ENCODE measurements at regions of chr17 and their contacts with region 1.

Region 1: DNA sequence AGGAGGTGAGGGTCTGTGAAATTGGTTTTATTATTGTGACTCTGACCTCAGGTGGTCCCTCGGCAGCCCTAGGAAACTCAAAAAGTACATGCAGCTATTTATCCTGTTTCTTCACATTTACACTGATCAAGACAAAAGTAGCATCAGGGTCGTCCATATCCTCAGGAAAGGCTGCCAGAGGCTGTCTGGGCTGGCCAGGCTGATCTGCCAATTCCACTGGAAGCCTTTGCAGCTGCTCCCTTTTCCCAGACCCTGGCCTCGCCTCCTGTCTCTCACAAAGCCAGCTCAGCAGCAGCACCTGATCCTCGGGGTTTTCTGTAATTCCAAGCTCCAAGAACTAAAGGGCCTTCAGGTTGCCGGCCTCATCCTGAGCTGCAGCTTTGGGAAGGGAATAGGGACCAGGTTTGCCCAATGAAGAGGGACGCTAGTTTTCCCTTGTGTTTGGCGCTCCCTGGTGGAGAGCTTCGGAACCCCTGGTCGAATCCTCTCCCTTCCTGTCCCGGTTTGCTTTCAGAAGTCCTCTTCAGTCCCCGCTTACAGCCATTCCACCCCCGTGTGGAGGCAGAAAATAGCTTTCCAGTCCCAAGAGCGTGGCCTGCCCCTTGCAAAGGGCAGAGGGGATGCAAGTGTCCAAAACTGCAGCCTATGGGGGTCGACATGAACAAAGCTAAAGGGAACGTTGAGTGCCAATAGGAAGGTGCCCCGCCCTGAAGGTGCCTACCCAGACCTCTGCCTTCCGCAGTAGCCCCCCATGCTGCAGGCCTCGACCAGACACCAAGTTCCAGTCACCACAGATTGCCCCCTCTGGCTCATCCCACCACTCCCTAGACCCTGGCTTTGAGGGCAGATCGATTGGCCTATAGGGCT is 13.4 kb downstream of the MFSD6L start:
- DNase-seq: peak; percentile 68
- ATAC-seq: no peak
- H3K4me3 ChIP-seq: no peak overlapping the region
- H3K4me3 Mint-ChIP-seq: no peak overlapping the region
- H3K27ac ChIP-seq: no peak overlapping the region
- H3K27ac Mint-ChIP-seq: no peak overlapping the region
- H3K4me1 ChIP-seq: peaks cover 3 to 6% of the 10 kb centered on the region in 2 donors
- H3K4me1 Mint-ChIP-seq: peaks cover 2% of the 10 kb centered on the region
- H3K27me3 ChIP-seq: peaks cover 0 to 6% (median 0%) of the 10 kb centered on the region in 4 experiments
- H3K27me3 Mint-ChIP-seq: peaks cover 6% of the 10 kb centered on the region
- CTCF ChIP-seq: peak; percentile 94

Region 2: DNA sequence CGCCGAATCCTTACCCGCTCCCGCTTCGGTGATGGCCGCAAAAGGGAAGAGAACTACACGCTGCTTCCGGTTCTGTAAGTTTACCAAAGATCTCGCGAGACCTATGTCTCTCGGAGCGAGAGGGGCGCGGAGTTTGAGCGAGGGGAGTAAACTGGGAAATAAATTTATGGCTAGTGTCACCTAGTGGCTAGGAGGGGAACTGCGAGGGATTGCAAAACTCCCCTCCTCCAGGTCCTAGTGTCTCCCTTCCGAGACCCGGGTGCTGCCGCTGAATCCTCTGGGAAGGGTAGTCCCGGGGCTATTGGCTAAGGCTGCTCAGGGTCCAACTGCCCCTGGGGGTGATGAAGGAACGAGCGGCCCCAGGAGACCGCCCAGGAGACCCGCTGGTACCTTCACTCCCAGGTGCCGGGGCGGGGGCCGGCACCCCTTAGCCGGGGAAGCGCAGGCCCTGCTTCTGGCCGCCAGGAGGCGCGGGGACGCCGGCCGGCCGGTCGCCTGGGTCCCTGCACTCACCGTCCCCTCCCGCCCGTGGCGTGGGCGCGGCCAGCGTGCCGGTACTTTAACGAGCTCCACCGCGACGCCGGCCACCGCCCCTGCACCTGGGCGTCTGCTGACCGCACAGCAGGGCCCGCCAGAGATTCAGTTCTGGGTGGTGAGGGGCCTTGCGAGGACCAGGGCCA is 402.5 kb before region 1 on chr17 and contains the start of gene RPL26:
- CTCF ChIA-PET with region 1: interaction called, 16 read pairs
- POLR2A ChIA-PET with region 1: no interaction called
- intact Hi-C with region 1: loop called (anchors 1 kb)
- DNase-seq: peak; percentile 98
- ATAC-seq: peak; percentile 89
- H3K4me3 ChIP-seq: peak within 1 kb of the TSS; percentile 73 to 95 (median 84)
- H3K4me3 Mint-ChIP-seq: peak within 1 kb of the TSS; percentile 89
- H3K27ac ChIP-seq: peak within 1 kb of the TSS; percentile 72 to 82
- H3K27ac Mint-ChIP-seq: peak within 1 kb of the TSS; percentile 87
- H3K4me1 ChIP-seq: peaks cover 25 to 36% of the 10 kb centered on the region in 2 donors
- H3K4me1 Mint-ChIP-seq: peaks cover 50% of the 10 kb centered on the region
- H3K27me3 ChIP-seq: no peaks in the 10 kb centered on the region
- H3K27me3 Mint-ChIP-seq: no peaks in the 10 kb centered on the region
- CTCF ChIP-seq: peak; percentile 100
- total RNA-seq, gene RPL26: 2,601 and 2,684 TPM in 2 replicates

Region 3: GRCh38 chr17:8409966-8410864 is 375.6 kb before region 1 on chr17:
- CTCF ChIA-PET with region 1: interaction called, 13 read pairs
- POLR2A ChIA-PET with region 1: no interaction called
- intact Hi-C with region 1: no loop called
- DNase-seq: peak; percentile 85
- ATAC-seq: peak; percentile 76
- H3K4me3 ChIP-seq: no peak overlapping the region
- H3K4me3 Mint-ChIP-seq: no peak overlapping the region
- H3K27ac ChIP-seq: no peak overlapping the region
- H3K27ac Mint-ChIP-seq: peak overlapping the region; percentile 50
- H3K4me1 ChIP-seq: peaks cover 0 to 5% of the 10 kb centered on the region in 2 donors
- H3K4me1 Mint-ChIP-seq: peaks cover 4% of the 10 kb centered on the region
- H3K27me3 ChIP-seq: peaks cover 0 to 19% (median 4%) of the 10 kb centered on the region in 4 experiments
- H3K27me3 Mint-ChIP-seq: peaks cover 21% of the 10 kb centered on the region
- CTCF ChIP-seq: peak; percentile 95

Region 4: DNA sequence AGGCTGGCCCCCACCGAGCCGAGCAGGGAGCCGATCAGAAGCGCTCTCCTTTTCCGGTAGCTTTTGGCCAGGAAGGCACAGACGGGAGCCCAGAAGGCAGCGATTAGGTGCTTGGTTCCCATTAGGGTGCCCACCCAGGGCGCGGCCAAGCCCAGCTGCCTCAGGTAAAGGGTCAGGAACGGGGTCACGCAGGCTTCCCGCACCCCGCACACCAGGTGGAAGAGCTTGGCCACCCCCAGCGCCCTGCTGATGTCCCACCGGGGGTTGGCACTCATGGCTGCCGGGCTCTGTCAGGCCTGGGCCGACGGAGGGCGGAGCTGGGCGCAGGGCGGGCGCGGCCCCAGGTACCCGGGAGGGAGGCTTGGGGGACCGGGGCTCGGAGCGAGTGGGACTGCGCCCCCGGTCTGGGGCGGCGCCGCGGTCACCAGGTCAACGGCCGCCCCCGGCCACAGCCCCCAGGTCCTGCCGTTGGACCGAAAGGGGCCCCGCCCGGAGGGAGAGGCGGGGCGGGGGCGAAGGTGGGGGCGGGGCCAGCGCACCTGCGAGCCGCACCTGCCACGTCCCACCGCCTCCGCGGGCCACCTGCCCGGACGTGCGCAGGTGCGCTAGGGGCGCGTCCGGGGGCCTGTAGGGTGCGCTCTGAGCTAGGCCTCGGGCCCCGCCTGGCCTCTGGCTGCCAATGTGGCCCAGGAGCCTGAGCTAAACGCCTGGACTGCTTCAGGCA is 13.2 kb after region 1 on chr17 and contains the start of gene MFSD6L:
- CTCF ChIA-PET with region 1: interaction called, 16 read pairs
- POLR2A ChIA-PET with region 1: no interaction called
- intact Hi-C with region 1: no loop called
- DNase-seq: peak; percentile 67
- ATAC-seq: peak; percentile 73
- H3K4me3 ChIP-seq: no peak within 1 kb of the TSS
- H3K4me3 Mint-ChIP-seq: no peak within 1 kb of the TSS
- H3K27ac ChIP-seq: no peak within 1 kb of the TSS
- H3K27ac Mint-ChIP-seq: no peak within 1 kb of the TSS
- H3K4me1 ChIP-seq: peaks cover 0 to 3% of the 10 kb centered on the region in 2 donors
- H3K4me1 Mint-ChIP-seq: peaks cover 12% of the 10 kb centered on the region
- H3K27me3 ChIP-seq: no peaks in the 10 kb centered on the region
- H3K27me3 Mint-ChIP-seq: no peaks in the 10 kb centered on the region
- CTCF ChIP-seq: peak; percentile 40
- total RNA-seq, gene MFSD6L: 0.22 and 0.37 TPM in 2 replicates

Region 5: GRCh38 chr17:8806926-8807550 is 21.3 kb after region 1 on chr17:
- CTCF ChIA-PET with region 1: interaction called, 41 read pairs
- POLR2A ChIA-PET with region 1: no interaction called
- intact Hi-C with region 1: no loop called
- DNase-seq: peak; percentile 88
- ATAC-seq: peak; percentile 89
- H3K4me3 ChIP-seq: peak overlapping the region in 2 of 5 experiments; percentile 10 to 26
- H3K4me3 Mint-ChIP-seq: peak overlapping the region; percentile 76
- H3K27ac ChIP-seq: peak overlapping the region; percentile 95 to 97
- H3K27ac Mint-ChIP-seq: peak overlapping the region; percentile 95
- H3K4me1 ChIP-seq: peaks cover 36 to 42% of the 10 kb centered on the region in 2 donors
- H3K4me1 Mint-ChIP-seq: peaks cover 44% of the 10 kb centered on the region
- H3K27me3 ChIP-seq: no peaks in the 10 kb centered on the region
- H3K27me3 Mint-ChIP-seq: peaks cover 4% of the 10 kb centered on the region
- CTCF ChIP-seq: no peak

Region 6: DNA sequence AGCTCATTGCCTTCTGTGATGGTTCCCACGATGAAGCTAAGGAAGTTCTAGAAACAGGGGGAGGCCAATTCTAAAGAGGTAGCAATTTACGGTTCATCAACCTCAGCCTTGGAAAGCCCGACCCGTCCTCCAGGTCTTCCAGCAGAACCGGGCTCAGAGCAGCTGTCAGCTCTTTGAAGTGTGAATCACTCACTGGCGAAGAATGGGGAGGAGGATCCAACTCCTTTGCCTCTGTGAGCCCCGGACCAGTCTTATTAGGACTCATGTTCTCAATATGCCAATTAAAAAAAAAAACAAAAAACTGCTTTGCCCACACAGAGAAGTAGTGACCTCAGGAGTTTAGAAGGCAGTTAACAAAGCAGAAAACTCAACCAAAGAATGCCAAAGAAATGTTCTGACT is 758.4 kb after region 1 on chr17:
- CTCF ChIA-PET with region 1: no interaction called
- POLR2A ChIA-PET with region 1: no interaction called
- intact Hi-C with region 1: no loop called
- DNase-seq: no peak
- ATAC-seq: no peak
- H3K4me3 ChIP-seq: no peak overlapping the region
- H3K4me3 Mint-ChIP-seq: no peak overlapping the region
- H3K27ac ChIP-seq: no peak overlapping the region
- H3K27ac Mint-ChIP-seq: no peak overlapping the region
- H3K4me1 ChIP-seq: no peaks in the 10 kb centered on the region
- H3K4me1 Mint-ChIP-seq: no peaks in the 10 kb centered on the region
- H3K27me3 ChIP-seq: no peaks in the 10 kb centered on the region
- H3K27me3 Mint-ChIP-seq: no peaks in the 10 kb centered on the region
- CTCF ChIP-seq: no peak